ENCODE measurements at regions of chr9 and their contacts with region 1.

Region 1: DNA sequence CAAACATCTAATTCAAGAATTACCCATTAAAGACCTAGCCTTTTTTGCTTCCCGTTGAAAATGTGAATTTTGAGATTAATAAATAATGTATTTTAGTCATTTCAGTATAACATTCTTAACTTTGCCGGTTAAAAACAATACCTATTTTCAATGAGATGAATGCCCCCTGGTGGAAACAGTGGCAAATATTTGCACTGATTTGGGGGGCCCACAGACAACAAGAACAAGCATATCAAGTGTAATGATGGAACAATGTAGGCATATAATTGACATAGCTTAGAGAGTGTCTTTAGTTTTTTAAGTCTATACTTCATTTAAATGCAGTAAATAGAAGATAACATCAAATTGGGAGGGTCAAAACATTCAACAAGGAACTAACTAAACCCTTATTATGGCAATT is 111.9 kb downstream of the NTRK2 start:
- DNase-seq: peak in 17 of 42 donors; percentile 8 to 72 (median 25)

Region 2: GRCh38 chr9:84697509-84698114 is 83.8 kb before region 1 on chr9:
- intact Hi-C with region 1: loop called (anchors 10 kb)
- DNase-seq: peak; percentile 24 to 89 (median 72)